Endothelial cell of umbilical vein (primary cell): ENCODE measurements at regions of chr10 and their contacts with region 1.

Region 1: DNA sequence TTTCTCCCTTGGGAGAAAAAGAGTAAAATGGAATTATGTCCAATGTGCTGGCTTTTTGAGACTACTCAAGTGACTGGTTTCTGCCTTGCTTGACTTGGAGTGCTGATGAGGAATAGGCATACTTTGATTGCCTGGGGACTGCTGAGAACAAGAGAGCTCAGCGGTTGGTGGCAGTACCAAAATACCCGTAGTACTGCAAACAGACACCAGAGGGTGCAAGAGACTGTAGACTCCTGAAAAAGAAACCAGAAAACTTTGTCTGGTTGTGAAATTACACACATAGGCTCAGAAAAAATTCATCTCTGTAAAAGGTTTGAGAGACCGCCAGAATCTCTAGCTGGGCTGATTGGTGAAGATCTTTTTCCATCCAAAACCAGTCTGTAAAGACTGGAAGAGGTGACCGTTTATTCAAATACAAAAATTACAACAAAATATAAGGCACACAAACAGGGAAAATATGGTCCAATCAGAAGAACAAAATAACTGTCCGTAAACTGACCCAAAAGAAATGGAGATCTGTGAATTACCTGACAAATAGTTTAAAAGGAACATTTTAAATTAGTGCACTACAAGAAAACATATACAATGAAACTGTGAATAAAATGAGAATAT is 18.5 kb downstream of the BICC1 start:
- DNase-seq: peak; percentile 68
- H3K4me3 ChIP-seq: no peak overlapping the region
- H3K27ac ChIP-seq: no peak overlapping the region
- H3K4me1 ChIP-seq: no peaks in the 10 kb centered on the region
- H3K27me3 ChIP-seq: no peaks in the 10 kb centered on the region
- CTCF ChIP-seq: peak; percentile 64 to 75
- POLR2A ChIP-seq: no peak

Region 2: GRCh38 chr10:58414270-58415041 is 116.7 kb before region 1 on chr10:
- CTCF ChIA-PET with region 1: interaction called, 6 read pairs
- POLR2A ChIA-PET with region 1: no interaction called
- dilution Hi-C with region 1: no loop called
- intact Hi-C with region 1: loop called (anchors 1 kb)
- DNase-seq: no peak
- H3K4me3 ChIP-seq: no peak overlapping the region
- H3K27ac ChIP-seq: no peak overlapping the region
- H3K4me1 ChIP-seq: no peaks in the 10 kb centered on the region
- H3K27me3 ChIP-seq: no peaks in the 10 kb centered on the region
- CTCF ChIP-seq: no peak
- POLR2A ChIP-seq: no peak

Region 3: GRCh38 chr10:58518775-58519174 is 12.4 kb before region 1 on chr10:
- CTCF ChIA-PET with region 1: interaction called, 18 read pairs
- POLR2A ChIA-PET with region 1: no interaction called
- dilution Hi-C with region 1: no loop called
- intact Hi-C with region 1: no loop called
- DNase-seq: no peak
- H3K4me3 ChIP-seq: no peak overlapping the region
- H3K27ac ChIP-seq: no peak overlapping the region
- H3K4me1 ChIP-seq: no peaks in the 10 kb centered on the region
- H3K27me3 ChIP-seq: peaks cover 2 to 18% of the 10 kb centered on the region in 2 experiments
- CTCF ChIP-seq: no peak
- POLR2A ChIP-seq: no peak

Region 4: GRCh38 chr10:58641095-58641531 is 109.9 kb after region 1 on chr10:
- CTCF ChIA-PET with region 1: interaction called, 8 read pairs
- POLR2A ChIA-PET with region 1: no interaction called
- dilution Hi-C with region 1: no loop called
- intact Hi-C with region 1: loop called (anchors 1 kb)
- DNase-seq: no peak
- H3K4me3 ChIP-seq: no peak overlapping the region
- H3K27ac ChIP-seq: no peak overlapping the region
- H3K4me1 ChIP-seq: peaks cover 2% of the 10 kb centered on the region
- H3K27me3 ChIP-seq: no peaks in the 10 kb centered on the region
- CTCF ChIP-seq: peak in 1 of 2 donors; percentile 3
- POLR2A ChIP-seq: no peak

Region 5: DNA sequence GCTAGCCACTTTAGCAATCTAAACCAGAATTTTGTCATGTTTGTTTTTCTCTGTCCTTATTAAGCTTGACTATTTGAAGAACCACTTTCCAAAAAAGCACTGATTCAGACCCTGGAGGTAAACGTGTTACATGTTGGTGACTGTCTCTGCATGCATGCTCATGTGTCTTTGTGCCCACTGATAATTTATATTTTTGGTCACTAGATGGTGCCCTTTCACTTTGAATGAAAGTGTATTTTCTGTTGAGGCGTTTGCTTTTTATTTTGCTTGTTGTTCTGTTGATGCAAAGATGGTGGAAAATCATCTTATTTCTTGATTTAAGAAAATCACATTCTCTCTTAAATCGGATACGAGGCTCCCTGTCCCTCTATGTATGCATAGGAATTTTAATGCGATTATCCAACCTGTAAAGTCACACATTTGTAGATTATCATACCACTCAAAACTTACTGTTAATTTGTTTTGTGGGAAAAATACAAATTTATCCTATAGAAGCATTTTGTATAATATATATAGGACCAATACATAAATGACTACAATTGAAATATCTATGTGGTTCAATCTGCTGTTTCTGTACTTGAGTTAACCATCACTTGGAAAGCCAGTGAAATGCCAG is 250.8 kb after region 1 on chr10:
- CTCF ChIA-PET with region 1: no interaction called
- POLR2A ChIA-PET with region 1: no interaction called
- dilution Hi-C with region 1: no loop called
- intact Hi-C with region 1: loop called (anchors 1 kb)
- DNase-seq: peak; percentile 32
- H3K4me3 ChIP-seq: no peak overlapping the region
- H3K27ac ChIP-seq: no peak overlapping the region
- H3K4me1 ChIP-seq: no peaks in the 10 kb centered on the region
- H3K27me3 ChIP-seq: no peaks in the 10 kb centered on the region
- CTCF ChIP-seq: peak; percentile 25 to 40
- POLR2A ChIP-seq: no peak

Region 6: DNA sequence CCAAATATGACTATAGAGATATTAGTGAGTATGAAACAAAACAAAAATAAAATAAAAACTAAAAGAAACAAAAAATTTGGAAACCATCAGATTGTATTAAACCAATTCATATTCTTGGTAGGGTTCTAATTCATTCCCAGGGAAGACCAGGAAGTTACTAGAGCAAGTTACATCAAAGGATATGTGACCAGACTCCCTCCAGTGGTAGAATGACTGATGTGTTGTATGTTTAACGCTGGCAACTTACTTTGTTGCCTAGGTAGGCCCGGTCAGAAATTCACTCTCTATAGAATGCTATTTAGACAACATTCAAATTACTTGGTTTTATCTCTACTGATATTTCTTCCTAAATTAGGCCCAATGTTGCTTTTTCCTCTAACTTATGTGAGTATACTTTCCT is 650.5 kb after region 1 on chr10:
- CTCF ChIA-PET with region 1: no interaction called
- POLR2A ChIA-PET with region 1: no interaction called
- dilution Hi-C with region 1: no loop called
- intact Hi-C with region 1: loop called (anchors 5 kb)
- DNase-seq: peak; percentile 43
- H3K4me3 ChIP-seq: no peak overlapping the region
- H3K27ac ChIP-seq: no peak overlapping the region
- H3K4me1 ChIP-seq: peaks cover under 1% of the 10 kb centered on the region
- H3K27me3 ChIP-seq: peaks cover 4 to 11% of the 10 kb centered on the region in 2 experiments
- CTCF ChIP-seq: peak; percentile 8 to 11
- POLR2A ChIP-seq: no peak

Region 7: DNA sequence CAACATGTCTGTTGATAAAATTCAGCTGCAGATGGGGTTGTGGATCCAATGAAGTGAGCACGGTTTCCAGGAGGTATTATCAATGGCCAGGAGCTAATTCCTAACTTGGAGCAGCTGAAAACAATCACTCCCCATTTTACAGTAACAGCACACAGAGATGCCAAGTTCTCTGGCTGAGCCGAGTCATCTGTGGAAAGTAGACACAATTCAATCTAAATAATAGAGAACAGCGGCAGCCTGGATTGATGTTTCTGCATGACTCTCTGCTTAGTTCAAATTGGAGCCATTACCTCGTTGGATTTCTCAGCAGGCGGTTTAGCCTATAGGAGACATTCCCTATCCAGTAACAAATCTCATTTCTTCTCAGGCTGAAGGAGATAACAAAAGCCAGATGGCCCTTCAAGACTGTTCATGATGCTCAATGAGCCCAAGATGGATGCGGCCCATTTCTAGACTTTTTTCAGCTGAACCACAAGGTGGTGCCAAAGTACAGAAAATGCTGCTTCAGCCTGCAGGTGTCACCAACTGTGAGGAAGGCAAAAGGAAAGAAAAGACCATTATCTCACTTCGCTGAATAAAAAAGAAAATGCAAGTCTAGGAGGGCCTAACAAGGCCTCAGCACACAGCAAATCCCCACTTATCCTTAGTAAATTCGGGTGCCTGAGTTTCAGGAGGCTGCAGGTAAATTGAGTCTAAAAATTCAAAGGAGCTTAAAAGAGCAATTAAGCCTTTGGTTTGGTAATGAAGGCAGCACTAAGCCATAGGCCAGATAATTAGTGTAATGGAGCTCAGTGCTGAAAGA is 1094.7 kb after region 1 on chr10:
- CTCF ChIA-PET with region 1: interaction called, 12 read pairs
- POLR2A ChIA-PET with region 1: no interaction called
- dilution Hi-C with region 1: no loop called
- intact Hi-C with region 1: no loop called
- DNase-seq: peak; percentile 67
- H3K4me3 ChIP-seq: no peak overlapping the region
- H3K27ac ChIP-seq: no peak overlapping the region
- H3K4me1 ChIP-seq: no peaks in the 10 kb centered on the region
- H3K27me3 ChIP-seq: peaks cover 4 to 7% of the 10 kb centered on the region in 2 experiments
- CTCF ChIP-seq: peak; percentile 68 to 69
- POLR2A ChIP-seq: no peak